ENCODE measurements at regions of chr3 and their contacts with region 1.

Region 1: DNA sequence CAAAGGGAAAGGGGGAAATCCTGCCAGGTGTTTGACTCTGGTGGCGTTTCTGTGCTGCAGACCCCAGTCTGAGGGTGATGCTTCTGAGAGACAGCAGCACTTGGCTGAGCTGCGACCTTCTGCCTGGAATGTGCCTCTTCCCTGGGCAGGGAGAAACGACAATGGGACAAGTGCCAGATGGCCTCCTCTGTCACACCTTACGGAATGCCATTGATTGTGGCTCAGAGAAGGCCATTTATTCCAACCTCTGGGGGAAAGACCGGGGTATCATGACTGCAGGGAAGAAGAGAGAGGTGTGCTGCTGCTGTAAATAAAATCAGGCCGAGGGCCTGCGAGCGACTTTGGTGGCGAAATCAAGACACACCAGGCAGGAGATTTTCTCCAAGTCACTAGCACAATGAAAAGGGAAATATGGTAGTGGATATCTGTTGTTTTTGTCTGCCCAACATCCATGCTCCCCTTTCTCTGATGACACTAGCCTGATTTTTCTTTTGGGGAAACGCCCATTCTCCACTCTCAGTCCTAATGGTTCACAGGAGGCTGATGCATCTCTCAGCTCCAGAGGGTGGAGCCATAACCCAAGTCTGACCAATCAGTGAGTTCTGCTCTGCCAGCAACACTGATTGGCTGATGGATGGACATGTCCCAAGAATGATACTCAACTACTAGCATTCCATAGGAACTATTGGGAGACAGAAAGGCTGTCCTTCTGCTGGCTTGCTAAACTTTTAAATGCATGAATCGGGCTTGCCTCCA is 336.1 kb downstream of the FOXP1 start:
- DNase-seq: peak; percentile 70 to 85 (median 74)
- ATAC-seq: peak; percentile 92
- H3K4me3 ChIP-seq: no peak overlapping the region
- H3K27ac ChIP-seq: no peak overlapping the region
- H3K4me1 ChIP-seq: peaks cover 7 to 16% of the 10 kb centered on the region in 2 experiments; a peak in 3 of 5 replicates
- H3K27me3 ChIP-seq: no peaks in the 10 kb centered on the region
- CTCF ChIP-seq: 0 out of 6 replicates have a peak, but pooled peaks of 1 of the 3 experiments have one; percentile 5
- EP300 ChIP-seq: no peak
- POLR2A ChIP-seq: no peak
- RAD21 ChIP-seq: no peak; a peak in 1 of 4 replicates

Region 2: GRCh38 chr3:71397046-71397445 is 149.6 kb after region 1 on chr3:
- CTCF ChIA-PET with region 1: no interaction called
- POLR2A ChIA-PET with region 1: no interaction called
- in situ Hi-C with region 1: no loop called
- intact Hi-C with region 1: loop called (anchors 10 kb)
- DNase-seq: peak; percentile 32 to 77 (median 34)
- ATAC-seq: peak; percentile 51
- H3K4me3 ChIP-seq: no peak overlapping the region
- H3K27ac ChIP-seq: peak overlapping the region; percentile 10; the same call in 1 of the 3 replicates
- H3K4me1 ChIP-seq: peaks cover 10 to 56% of the 10 kb centered on the region in 2 experiments; a peak in 4 of 5 replicates
- H3K27me3 ChIP-seq: no peaks in the 10 kb centered on the region
- CTCF ChIP-seq: peak; percentile 10 to 43 (median 43); a peak in 4 of 6 replicates
- EP300 ChIP-seq: no peak
- POLR2A ChIP-seq: no peak
- RAD21 ChIP-seq: 0 out of 4 replicates have a peak, but pooled peaks of 1 of the 2 experiments have one; percentile 26